ENCODE measurements at regions of chr15 and their contacts with region 1.

Region 1: DNA sequence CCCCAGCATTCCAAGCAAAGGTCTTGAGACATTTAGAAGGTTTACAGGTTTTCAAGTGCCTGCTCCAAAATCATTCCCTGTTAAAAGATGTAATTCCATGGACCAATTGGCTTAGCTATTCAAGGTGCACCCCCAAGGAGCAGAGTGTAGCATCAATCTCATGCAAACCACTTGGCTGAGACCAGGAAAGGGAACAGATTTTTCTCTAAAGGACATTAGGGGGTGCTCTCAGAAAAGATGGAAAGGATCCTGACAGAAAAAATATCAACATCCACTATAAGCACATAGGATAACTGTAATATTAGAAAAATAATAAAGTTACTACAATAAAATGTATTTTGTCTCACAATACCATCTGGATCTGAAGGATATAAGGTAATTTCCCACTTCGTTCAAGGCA is 328.0 kb upstream of the CDIN1 start:
- DNase-seq: no peak
- ATAC-seq: no peak
- H3K4me3 ChIP-seq: no peak overlapping the region
- H3K4me3 Mint-ChIP-seq: no peak overlapping the region
- H3K27ac ChIP-seq: no peak overlapping the region
- H3K27ac Mint-ChIP-seq: no peak overlapping the region
- H3K4me1 ChIP-seq: no peaks in the 10 kb centered on the region
- H3K4me1 Mint-ChIP-seq: no peaks in the 10 kb centered on the region
- H3K27me3 ChIP-seq: no peaks in the 10 kb centered on the region
- H3K27me3 Mint-ChIP-seq: no peaks in the 10 kb centered on the region
- CTCF ChIP-seq: no peak

Region 2: DNA sequence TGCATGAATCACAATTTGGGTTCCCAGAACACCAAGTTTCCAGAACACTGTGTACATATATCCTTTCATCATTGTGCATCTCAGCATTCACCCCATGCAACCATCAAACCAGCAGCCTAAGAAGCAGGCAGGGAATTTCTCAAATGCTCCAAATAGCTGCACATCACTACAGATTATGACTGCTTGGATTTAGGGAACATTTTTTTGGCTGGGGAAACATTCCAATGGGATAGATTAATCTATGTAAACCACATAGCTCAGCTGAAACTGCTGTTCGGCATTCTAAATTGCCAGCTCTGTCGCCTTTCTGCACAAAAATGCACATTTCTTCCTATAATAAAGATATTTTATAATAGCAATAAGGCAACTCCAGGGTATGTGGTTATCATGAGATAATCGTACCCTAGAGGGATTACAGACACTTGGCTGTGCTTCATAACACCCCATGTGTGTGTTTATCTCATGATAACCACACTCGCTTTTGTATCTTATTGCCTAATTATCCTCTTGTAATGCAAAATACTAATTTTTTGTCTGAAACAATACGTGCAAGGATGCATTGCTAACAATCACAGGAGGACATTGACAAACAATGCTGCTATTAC is 221.7 kb before region 1 on chr15:
- CTCF ChIA-PET with region 1: no interaction called
- POLR2A ChIA-PET with region 1: no interaction called
- intact Hi-C with region 1: no loop called
- DNase-seq: no peak
- ATAC-seq: no peak
- H3K4me3 ChIP-seq: no peak overlapping the region
- H3K4me3 Mint-ChIP-seq: no peak overlapping the region
- H3K27ac ChIP-seq: no peak overlapping the region
- H3K27ac Mint-ChIP-seq: no peak overlapping the region
- H3K4me1 ChIP-seq: no peaks in the 10 kb centered on the region
- H3K4me1 Mint-ChIP-seq: no peaks in the 10 kb centered on the region
- H3K27me3 ChIP-seq: no peaks in the 10 kb centered on the region
- H3K27me3 Mint-ChIP-seq: no peaks in the 10 kb centered on the region
- CTCF ChIP-seq: no peak

Region 3: DNA sequence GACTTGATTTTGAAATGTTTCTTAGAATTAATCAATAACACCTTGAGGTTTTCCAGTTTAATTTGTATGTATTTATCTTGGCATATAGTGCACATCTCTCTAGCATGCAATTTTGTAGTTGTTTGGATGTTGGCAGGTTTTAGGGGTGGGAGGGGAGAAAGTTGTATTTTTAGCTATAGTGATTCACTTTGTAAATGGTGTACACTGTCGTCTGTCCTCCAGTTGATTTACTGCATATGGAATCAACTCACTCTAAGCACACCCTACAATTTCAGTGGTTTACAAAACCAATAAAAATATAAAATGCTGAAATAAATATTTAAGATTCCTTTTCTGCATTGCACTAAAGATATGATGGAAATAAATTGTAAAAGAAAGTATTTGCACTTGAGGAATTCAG is 527.1 kb after region 1 on chr15:
- CTCF ChIA-PET with region 1: no interaction called
- POLR2A ChIA-PET with region 1: no interaction called
- intact Hi-C with region 1: loop called (anchors 10 kb)
- DNase-seq: no peak
- ATAC-seq: no peak
- H3K4me3 ChIP-seq: no peak overlapping the region
- H3K4me3 Mint-ChIP-seq: no peak overlapping the region
- H3K27ac ChIP-seq: no peak overlapping the region
- H3K27ac Mint-ChIP-seq: no peak overlapping the region
- H3K4me1 ChIP-seq: no peaks in the 10 kb centered on the region
- H3K4me1 Mint-ChIP-seq: no peaks in the 10 kb centered on the region
- H3K27me3 ChIP-seq: no peaks in the 10 kb centered on the region
- H3K27me3 Mint-ChIP-seq: no peaks in the 10 kb centered on the region
- CTCF ChIP-seq: no peak